H1 (cell line): ENCODE measurements at regions of chr1 and their contacts with region 1.

Region 1: DNA sequence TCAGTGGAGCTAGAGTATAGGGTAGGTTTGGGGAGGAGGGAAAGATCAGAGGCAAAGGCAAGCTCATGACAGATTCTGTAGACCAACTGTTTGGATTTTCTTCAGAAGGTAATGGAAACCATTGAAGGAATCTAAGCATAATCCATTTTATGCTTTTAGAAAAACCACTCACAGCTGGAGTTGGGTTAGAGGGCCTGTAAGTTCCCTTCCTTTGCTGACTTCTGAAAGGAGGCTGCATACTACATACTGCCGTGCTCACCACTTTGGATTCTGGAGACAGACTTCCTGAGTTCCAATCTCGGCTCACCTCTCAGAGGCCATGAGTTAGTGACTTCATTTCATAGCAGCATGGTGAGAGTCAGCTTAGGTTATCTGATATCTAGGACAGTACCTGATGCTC is 6.4 kb upstream of the SYT2 start:
- DNase-seq: no peak
- H3K4me3 ChIP-seq: no peak overlapping the region
- H3K27ac ChIP-seq: no peak overlapping the region
- H3K4me1 ChIP-seq: peaks cover 7 to 15% (median 13%) of the 10 kb centered on the region in 4 experiments
- H3K27me3 ChIP-seq: no peaks in the 10 kb centered on the region; a peak in 1 of 7 replicates
- CTCF ChIP-seq: no peak
- EP300 ChIP-seq: no peak
- POLR2A ChIP-seq: no peak
- RAD21 ChIP-seq: no peak

Region 2: DNA sequence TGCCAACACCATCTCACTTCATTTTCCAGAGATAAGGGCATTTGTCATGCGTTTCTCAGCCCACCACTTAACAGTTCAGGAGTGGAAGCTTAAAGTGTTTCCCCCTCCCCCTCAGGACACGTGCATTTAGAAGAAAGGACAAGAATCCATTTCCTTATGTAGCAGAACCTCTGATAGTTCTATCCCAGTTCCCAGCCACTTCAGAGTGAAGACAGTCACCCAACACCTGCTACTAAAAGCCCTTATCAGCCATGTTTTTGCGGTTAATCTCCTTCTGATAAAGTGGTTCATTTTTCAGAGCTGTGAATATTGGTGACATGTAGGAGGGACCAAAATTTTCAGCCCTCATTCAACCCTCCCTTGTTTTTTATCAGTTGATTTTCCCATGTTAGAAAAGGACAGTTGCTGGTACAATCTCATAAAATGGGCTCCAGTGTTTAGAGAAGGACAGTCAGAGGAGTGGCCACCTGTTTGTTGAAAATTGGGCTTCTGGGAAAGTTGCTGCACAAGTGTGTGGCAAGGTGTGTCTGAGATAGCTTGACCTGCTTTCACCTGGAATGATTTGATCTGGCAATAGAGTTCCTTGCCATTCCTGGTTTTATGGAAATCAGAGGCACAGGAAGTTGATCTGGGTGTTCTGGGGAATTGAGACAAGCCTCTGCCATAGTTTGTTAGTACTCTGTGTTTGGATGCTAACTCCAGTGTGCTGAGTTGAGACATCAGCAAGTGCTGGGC is 254.1 kb before region 1 on chr1:
- CTCF ChIA-PET with region 1: interaction called, 18 read pairs
- POLR2A ChIA-PET with region 1: no interaction called
- DNase-seq: no peak
- H3K4me3 ChIP-seq: no peak overlapping the region
- H3K27ac ChIP-seq: no peak overlapping the region
- H3K4me1 ChIP-seq: peaks cover 0 to 2% (median 0%) of the 10 kb centered on the region in 4 experiments; a peak in 1 of 7 replicates
- H3K27me3 ChIP-seq: no peaks in the 10 kb centered on the region
- CTCF ChIP-seq: no peak
- EP300 ChIP-seq: no peak
- POLR2A ChIP-seq: no peak
- RAD21 ChIP-seq: no peak

Region 3: GRCh38 chr1:202505356-202505755 is 211.3 kb before region 1 on chr1:
- CTCF ChIA-PET with region 1: interaction called, 13 read pairs
- POLR2A ChIA-PET with region 1: no interaction called
- DNase-seq: no peak
- H3K4me3 ChIP-seq: no peak overlapping the region
- H3K27ac ChIP-seq: no peak overlapping the region
- H3K4me1 ChIP-seq: peaks cover 0 to 3% (median 0%) of the 10 kb centered on the region in 4 experiments; a peak in 2 of 7 replicates
- H3K27me3 ChIP-seq: no peaks in the 10 kb centered on the region
- CTCF ChIP-seq: no peak
- EP300 ChIP-seq: no peak
- POLR2A ChIP-seq: no peak
- RAD21 ChIP-seq: no peak

Region 4: GRCh38 chr1:202680586-202681352 is 35.9 kb before region 1 on chr1:
- CTCF ChIA-PET with region 1: interaction called, 32 read pairs
- POLR2A ChIA-PET with region 1: no interaction called
- DNase-seq: no peak
- H3K4me3 ChIP-seq: no peak overlapping the region; a peak in 1 of 8 replicates
- H3K27ac ChIP-seq: no peak overlapping the region
- H3K4me1 ChIP-seq: peaks cover 3 to 19% (median 6%) of the 10 kb centered on the region in 4 experiments; a peak in 5 of 7 replicates
- H3K27me3 ChIP-seq: no peaks in the 10 kb centered on the region
- CTCF ChIP-seq: no peak
- EP300 ChIP-seq: no peak
- POLR2A ChIP-seq: no peak
- RAD21 ChIP-seq: peak in 1 of 2 experiments; percentile 16; a peak in 2 of 4 replicates

Region 5: DNA sequence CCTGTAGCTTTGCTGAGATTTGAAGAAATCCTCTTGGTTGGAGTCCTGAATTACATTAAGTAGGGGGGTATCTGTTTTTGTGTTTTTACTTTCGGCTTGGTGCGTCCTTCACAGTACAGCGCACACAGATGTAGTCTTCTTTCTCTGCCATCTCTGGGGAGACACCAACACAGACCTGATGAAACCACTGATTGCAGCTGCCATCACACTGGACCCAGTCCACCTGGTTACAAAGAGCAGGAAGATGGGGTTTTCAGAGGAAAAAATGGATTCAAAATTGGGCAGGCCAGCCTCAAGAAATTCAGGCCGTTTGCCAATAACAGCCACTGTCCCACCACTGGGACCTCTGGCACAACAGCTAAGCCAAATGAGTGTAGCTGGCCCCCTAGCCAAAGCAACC is 12.3 kb after region 1 on chr1:
- CTCF ChIA-PET with region 1: interaction called, 10 read pairs
- POLR2A ChIA-PET with region 1: interaction called, 3 read pairs
- DNase-seq: no peak
- H3K4me3 ChIP-seq: no peak overlapping the region
- H3K27ac ChIP-seq: no peak overlapping the region
- H3K4me1 ChIP-seq: no peaks in the 10 kb centered on the region
- H3K27me3 ChIP-seq: no peaks in the 10 kb centered on the region
- CTCF ChIP-seq: no peak
- EP300 ChIP-seq: no peak
- POLR2A ChIP-seq: no peak
- RAD21 ChIP-seq: no peak

Region 6: DNA sequence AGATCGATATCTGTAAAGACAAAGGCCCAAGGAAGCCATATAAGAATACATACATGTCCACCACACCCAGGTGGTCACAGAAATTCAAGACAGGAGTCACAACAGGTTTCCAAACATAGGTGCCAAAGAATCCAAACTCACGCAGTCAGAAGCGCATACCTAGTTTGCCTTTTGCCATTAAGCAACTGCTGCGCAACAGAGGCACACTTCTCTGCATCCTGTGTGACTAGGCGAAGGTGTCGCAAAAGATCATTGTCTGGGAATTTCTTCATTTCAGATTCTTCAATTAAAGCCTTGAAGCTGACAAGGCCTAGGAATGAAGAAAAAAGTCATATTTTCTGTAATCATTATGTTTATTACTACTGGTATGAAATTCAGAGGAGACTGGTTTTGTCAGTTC is 25.8 kb after region 1 on chr1:
- CTCF ChIA-PET with region 1: no interaction called
- POLR2A ChIA-PET with region 1: no interaction called
- DNase-seq: no peak
- H3K4me3 ChIP-seq: no peak overlapping the region
- H3K27ac ChIP-seq: no peak overlapping the region
- H3K4me1 ChIP-seq: no peaks in the 10 kb centered on the region
- H3K27me3 ChIP-seq: no peaks in the 10 kb centered on the region
- CTCF ChIP-seq: no peak
- EP300 ChIP-seq: no peak
- POLR2A ChIP-seq: no peak
- RAD21 ChIP-seq: no peak

Region 7: DNA sequence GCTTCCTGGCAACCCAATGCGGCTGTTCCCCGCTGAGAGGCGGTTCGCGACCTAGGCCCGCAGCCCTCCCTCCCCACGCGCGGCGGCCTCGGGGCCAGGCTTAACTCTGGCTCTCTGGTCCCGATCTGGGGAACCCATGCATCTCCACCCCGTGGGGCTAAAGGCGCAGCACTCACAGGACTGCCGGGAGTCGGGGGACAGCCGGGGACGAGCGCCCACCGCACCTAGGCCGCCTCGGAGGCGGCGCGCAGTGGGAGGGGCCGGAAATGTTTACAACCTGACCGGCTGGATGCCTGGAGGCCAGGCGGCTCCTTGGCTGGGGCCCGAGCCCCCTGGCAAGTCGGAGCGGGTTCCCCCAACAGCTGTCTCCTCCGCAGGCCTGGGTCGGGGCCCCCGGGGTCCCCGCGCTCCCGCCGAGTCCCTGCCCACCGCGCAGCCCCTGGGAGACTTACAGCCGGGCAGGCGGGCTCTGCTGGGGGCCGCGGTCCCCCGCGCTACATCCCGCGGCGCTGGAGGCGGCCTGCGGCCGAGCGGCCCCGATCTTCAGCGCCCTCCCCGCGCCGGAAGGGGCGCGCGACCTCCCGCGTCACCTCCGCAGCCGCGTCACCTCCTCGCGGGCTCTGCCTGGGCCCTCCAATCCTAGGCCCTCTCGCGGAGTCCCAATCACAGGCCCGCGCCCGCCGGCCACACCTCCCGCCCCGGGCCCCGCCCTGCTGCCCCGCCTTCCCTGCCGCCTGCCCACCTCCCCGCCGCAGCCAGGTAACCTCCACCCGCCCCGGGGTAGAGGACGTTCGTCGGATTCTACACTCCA is 241.3 kb after region 1 on chr1 and contains the start of gene ADIPOR1:
- CTCF ChIA-PET with region 1: no interaction called
- POLR2A ChIA-PET with region 1: no interaction called
- DNase-seq: peak in 1 of 2 experiments; percentile 96
- H3K4me3 ChIP-seq: peak within 1 kb of the TSS; percentile 80 to 99 (median 86)
- H3K27ac ChIP-seq: peak within 1 kb of the TSS; percentile 79; the same call in 1 of the 2 replicates
- H3K4me1 ChIP-seq: peaks cover 0 to 3% (median 0%) of the 10 kb centered on the region in 4 experiments; a peak in 1 of 7 replicates
- H3K27me3 ChIP-seq: no peaks in the 10 kb centered on the region
- CTCF ChIP-seq: no peak
- EP300 ChIP-seq: no peak
- POLR2A ChIP-seq: peak; percentile 61 to 86
- RAD21 ChIP-seq: no peak
- total RNA-seq, gene ADIPOR1: 69.2 and 69.8 TPM in 2 replicates